ENCODE measurements at regions of chr6 and their contacts with region 1.

Region 1: GRCh38 chr6:161353208-161353613 is 79.3 kb upstream of the AGPAT4 start:
- DNase-seq: peak; percentile 54 to 80 (median 66)
- ATAC-seq: peak; percentile 90
- H3K4me3 ChIP-seq: no peak overlapping the region
- H3K27ac ChIP-seq: no peak overlapping the region
- H3K4me1 ChIP-seq: peaks cover 2 to 14% of the 10 kb centered on the region in 2 experiments; a peak in 3 of 5 replicates
- H3K27me3 ChIP-seq: no peaks in the 10 kb centered on the region
- CTCF ChIP-seq: peak; percentile 76 to 85 (median 79)
- EP300 ChIP-seq: no peak
- POLR2A ChIP-seq: no peak
- RAD21 ChIP-seq: peak; percentile 27 to 82; a peak in 2 of 4 replicates

Region 2: GRCh38 chr6:160051390-160051789 is 1301.8 kb before region 1 on chr6:
- CTCF ChIA-PET with region 1: no interaction called
- POLR2A ChIA-PET with region 1: no interaction called
- in situ Hi-C with region 1: no loop called
- intact Hi-C with region 1: no loop called
- DNase-seq: no peak
- ATAC-seq: no peak
- H3K4me3 ChIP-seq: no peak overlapping the region
- H3K27ac ChIP-seq: no peak overlapping the region
- H3K4me1 ChIP-seq: no peaks in the 10 kb centered on the region
- H3K27me3 ChIP-seq: no peaks in the 10 kb centered on the region
- CTCF ChIP-seq: no peak
- EP300 ChIP-seq: no peak
- POLR2A ChIP-seq: no peak
- RAD21 ChIP-seq: no peak

Region 3: GRCh38 chr6:161101517-161101916 is 251.7 kb before region 1 on chr6:
- CTCF ChIA-PET with region 1: no interaction called
- POLR2A ChIA-PET with region 1: no interaction called
- in situ Hi-C with region 1: no loop called
- intact Hi-C with region 1: loop called (anchors 5 kb)
- DNase-seq: peak in 1 of 4 experiments; percentile 32
- ATAC-seq: peak; percentile 80
- H3K4me3 ChIP-seq: no peak overlapping the region
- H3K27ac ChIP-seq: no peak overlapping the region
- H3K4me1 ChIP-seq: 0 out of 5 replicates have a peak, but pooled peaks cover 0 to 3% of the 10 kb centered on the region in 2 experiments
- H3K27me3 ChIP-seq: no peaks in the 10 kb centered on the region
- CTCF ChIP-seq: peak; percentile 52 to 64 (median 62)
- EP300 ChIP-seq: no peak
- POLR2A ChIP-seq: no peak
- RAD21 ChIP-seq: peak; percentile 45 to 65

Region 4: GRCh38 chr6:161137839-161138542 is 215.2 kb before region 1 on chr6:
- CTCF ChIA-PET with region 1: no interaction called
- POLR2A ChIA-PET with region 1: interaction called, 3 read pairs
- in situ Hi-C with region 1: no loop called
- intact Hi-C with region 1: loop called (anchors 1 kb)
- DNase-seq: no peak
- ATAC-seq: no peak
- H3K4me3 ChIP-seq: no peak overlapping the region
- H3K27ac ChIP-seq: no peak overlapping the region
- H3K4me1 ChIP-seq: peaks cover 4 to 31% of the 10 kb centered on the region in 2 experiments; a peak in 3 of 5 replicates
- H3K27me3 ChIP-seq: no peaks in the 10 kb centered on the region
- CTCF ChIP-seq: no peak
- EP300 ChIP-seq: no peak
- POLR2A ChIP-seq: no peak
- RAD21 ChIP-seq: no peak

Region 5: DNA sequence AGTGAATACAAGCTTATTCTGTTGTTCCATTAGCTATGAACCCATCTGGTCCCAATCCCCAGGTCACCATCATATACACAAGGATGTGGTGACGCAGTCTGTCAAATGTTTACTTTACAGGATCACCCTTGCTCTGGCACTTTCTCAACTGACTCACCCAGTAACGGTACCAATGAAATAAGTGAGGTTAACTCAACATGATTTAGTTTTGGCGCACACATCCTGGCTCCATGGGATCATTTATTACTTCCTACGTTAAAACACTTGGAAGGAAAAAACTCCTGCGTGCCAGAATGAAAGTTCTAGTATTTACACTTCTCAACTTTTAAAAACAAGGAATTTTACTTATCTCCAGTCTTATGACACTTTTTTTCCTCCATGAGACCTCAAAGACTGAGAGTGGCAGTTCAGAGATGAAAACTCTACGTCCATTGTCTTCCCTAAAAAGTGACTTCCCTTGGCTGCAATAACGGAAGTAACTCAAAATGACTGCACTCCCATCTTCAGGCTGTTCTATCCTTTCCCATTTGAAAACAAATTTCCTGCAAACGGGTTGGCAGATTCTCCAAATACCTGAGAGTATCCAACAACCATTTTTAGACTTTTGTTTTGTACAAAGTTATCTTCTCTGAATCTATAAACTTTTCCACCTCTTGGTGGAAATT is 95.3 kb before region 1 on chr6:
- CTCF ChIA-PET with region 1: no interaction called
- POLR2A ChIA-PET with region 1: no interaction called
- in situ Hi-C with region 1: no loop called
- intact Hi-C with region 1: loop called (anchors 5 kb)
- DNase-seq: no peak
- ATAC-seq: no peak
- H3K4me3 ChIP-seq: no peak overlapping the region
- H3K27ac ChIP-seq: peak overlapping the region; percentile 23; the same call in 1 of the 3 replicates
- H3K4me1 ChIP-seq: peaks cover 35 to 71% of the 10 kb centered on the region in 2 experiments; a peak in 4 of 5 replicates
- H3K27me3 ChIP-seq: no peaks in the 10 kb centered on the region; a peak in 1 of 5 replicates
- CTCF ChIP-seq: no peak; a peak in 1 of 6 replicates
- EP300 ChIP-seq: no peak
- POLR2A ChIP-seq: no peak
- RAD21 ChIP-seq: no peak

Region 6: GRCh38 chr6:161418463-161418945 is 65.3 kb after region 1 on chr6:
- CTCF ChIA-PET with region 1: no interaction called
- POLR2A ChIA-PET with region 1: no interaction called
- in situ Hi-C with region 1: no loop called
- intact Hi-C with region 1: no loop called
- DNase-seq: peak; percentile 57 to 81 (median 63)
- ATAC-seq: peak; percentile 87
- H3K4me3 ChIP-seq: no peak overlapping the region
- H3K27ac ChIP-seq: no peak overlapping the region
- H3K4me1 ChIP-seq: peaks cover 3 to 8% of the 10 kb centered on the region in 2 experiments; a peak in 4 of 5 replicates
- H3K27me3 ChIP-seq: peaks cover 39 to 55% of the 10 kb centered on the region in 2 experiments; a peak in 4 of 5 replicates
- CTCF ChIP-seq: peak; percentile 62 to 85 (median 76); a peak in 5 of 6 replicates
- EP300 ChIP-seq: no peak
- POLR2A ChIP-seq: no peak
- RAD21 ChIP-seq: peak; percentile 77 to 85

Region 7: GRCh38 chr6:161543684-161544309 is 190.6 kb after region 1 on chr6:
- CTCF ChIA-PET with region 1: no interaction called
- POLR2A ChIA-PET with region 1: no interaction called
- in situ Hi-C with region 1: no loop called
- intact Hi-C with region 1: no loop called
- DNase-seq: no peak
- ATAC-seq: no peak
- H3K4me3 ChIP-seq: no peak overlapping the region
- H3K27ac ChIP-seq: no peak overlapping the region
- H3K4me1 ChIP-seq: no peaks in the 10 kb centered on the region
- H3K27me3 ChIP-seq: no peaks in the 10 kb centered on the region
- CTCF ChIP-seq: no peak
- EP300 ChIP-seq: no peak
- POLR2A ChIP-seq: no peak
- RAD21 ChIP-seq: no peak

Region 8: GRCh38 chr6:161761966-161762365 is 408.8 kb after region 1 on chr6:
- CTCF ChIA-PET with region 1: no interaction called
- POLR2A ChIA-PET with region 1: no interaction called
- in situ Hi-C with region 1: no loop called
- intact Hi-C with region 1: no loop called
- DNase-seq: no peak
- ATAC-seq: no peak
- H3K4me3 ChIP-seq: no peak overlapping the region
- H3K27ac ChIP-seq: no peak overlapping the region
- H3K4me1 ChIP-seq: no peaks in the 10 kb centered on the region
- H3K27me3 ChIP-seq: no peaks in the 10 kb centered on the region; a peak in 1 of 5 replicates
- CTCF ChIP-seq: no peak
- EP300 ChIP-seq: no peak
- POLR2A ChIP-seq: no peak
- RAD21 ChIP-seq: no peak

Measured in K562 (cell line).